Activated CD8-positive, alpha-beta T cell treated with anti-CD3 and anti-CD28 coated beads for 36 hours (primary cell): ENCODE measurements at regions of chr3 and their contacts with region 1.

Region 1: DNA sequence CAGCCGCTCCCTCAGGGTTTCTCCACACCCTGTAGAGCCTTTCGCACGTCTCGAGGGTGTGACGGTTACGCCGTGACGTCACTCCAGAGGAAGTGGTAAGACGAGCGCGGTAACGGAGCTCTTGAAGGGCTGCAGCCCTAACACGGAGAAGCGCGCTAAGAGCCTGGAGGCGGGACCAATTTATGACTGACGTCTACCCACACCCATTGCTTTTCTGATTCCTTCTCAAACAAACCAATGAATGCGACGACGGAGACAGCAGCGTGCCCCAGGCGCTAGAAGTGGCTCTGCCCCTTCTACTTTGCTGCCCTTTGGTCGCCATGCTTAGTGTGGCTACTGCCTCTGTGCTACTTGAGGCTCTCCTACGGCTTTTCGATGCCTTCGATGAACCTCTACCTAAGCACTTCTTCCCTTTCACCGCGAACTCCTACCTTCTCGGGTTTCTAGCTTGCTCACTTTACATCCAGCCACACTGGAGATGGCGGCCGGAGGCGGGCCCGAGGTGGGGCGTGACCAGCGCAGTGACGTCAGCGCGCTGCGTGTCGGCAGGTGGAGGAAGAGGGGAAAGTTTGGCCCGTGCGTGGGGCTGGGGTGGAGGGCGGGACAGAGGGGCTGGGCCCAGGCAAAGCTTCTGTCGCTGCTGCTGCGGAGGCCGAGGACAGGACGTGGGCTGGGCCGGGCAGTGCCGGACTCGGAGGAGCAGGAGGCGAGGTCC is at the start of gene OXSR1:
- DNase-seq: peak; percentile 100
- ATAC-seq: peak; percentile 93
- H3K4me3 Mint-ChIP-seq: peak within 1 kb of the TSS; percentile 93
- H3K27ac Mint-ChIP-seq: peak within 1 kb of the TSS; percentile 99
- H3K4me1 Mint-ChIP-seq: peaks cover 42% of the 10 kb centered on the region
- H3K27me3 Mint-ChIP-seq: no peaks in the 10 kb centered on the region
- CTCF ChIP-seq: no peak
- total RNA-seq, gene OXSR1: 56.5 to 57.9 TPM

Region 2: GRCh38 chr3:38136777-38137614 is 28.1 kb before region 1 on chr3 and contains the start of gene ACAA1:
- CTCF ChIA-PET with region 1: interaction called, 31 read pairs
- POLR2A ChIA-PET with region 1: interaction called, 67 read pairs
- intact Hi-C with region 1: loop called (anchors 2 kb)
- DNase-seq: peak; percentile 100
- ATAC-seq: peak; percentile 92
- H3K4me3 Mint-ChIP-seq: peak within 1 kb of the TSS; percentile 92
- H3K27ac Mint-ChIP-seq: peak within 1 kb of the TSS; percentile 98
- H3K4me1 Mint-ChIP-seq: peaks cover 59% of the 10 kb centered on the region
- H3K27me3 Mint-ChIP-seq: no peaks in the 10 kb centered on the region
- CTCF ChIP-seq: no peak
- total RNA-seq, gene ACAA1: 70.1 to 72.0 TPM

Region 3: GRCh38 chr3:38154033-38154494 is 11.1 kb before region 1 on chr3:
- CTCF ChIA-PET with region 1: interaction called, 21 read pairs
- POLR2A ChIA-PET with region 1: interaction called, 29 read pairs
- intact Hi-C with region 1: loop called (anchors 2 kb)
- DNase-seq: no peak
- ATAC-seq: no peak
- H3K4me3 Mint-ChIP-seq: no peak overlapping the region
- H3K27ac Mint-ChIP-seq: peak overlapping the region; percentile 74
- H3K4me1 Mint-ChIP-seq: peaks cover 45% of the 10 kb centered on the region
- H3K27me3 Mint-ChIP-seq: no peaks in the 10 kb centered on the region
- CTCF ChIP-seq: no peak

Region 4: GRCh38 chr3:38190481-38190881 is 25.4 kb after region 1 on chr3:
- CTCF ChIA-PET with region 1: interaction called, 12 read pairs
- POLR2A ChIA-PET with region 1: interaction called, 4 read pairs
- intact Hi-C with region 1: no loop called
- DNase-seq: no peak
- ATAC-seq: peak; percentile 47
- H3K4me3 Mint-ChIP-seq: no peak overlapping the region
- H3K27ac Mint-ChIP-seq: no peak overlapping the region
- H3K4me1 Mint-ChIP-seq: peaks cover 2% of the 10 kb centered on the region
- H3K27me3 Mint-ChIP-seq: no peaks in the 10 kb centered on the region
- CTCF ChIP-seq: no peak